BJ (cell line): ENCODE measurements at regions of chr9 and their contacts with region 1.

Region 1: GRCh38 chr9:95167998-95168397 is 149.5 kb downstream of the FANCC start:
- DNase-seq: peak; percentile 50
- H3K4me3 ChIP-seq: no peak overlapping the region
- H3K27me3 ChIP-seq: no peaks in the 10 kb centered on the region
- CTCF ChIP-seq: peak; percentile 91

Region 2: DNA sequence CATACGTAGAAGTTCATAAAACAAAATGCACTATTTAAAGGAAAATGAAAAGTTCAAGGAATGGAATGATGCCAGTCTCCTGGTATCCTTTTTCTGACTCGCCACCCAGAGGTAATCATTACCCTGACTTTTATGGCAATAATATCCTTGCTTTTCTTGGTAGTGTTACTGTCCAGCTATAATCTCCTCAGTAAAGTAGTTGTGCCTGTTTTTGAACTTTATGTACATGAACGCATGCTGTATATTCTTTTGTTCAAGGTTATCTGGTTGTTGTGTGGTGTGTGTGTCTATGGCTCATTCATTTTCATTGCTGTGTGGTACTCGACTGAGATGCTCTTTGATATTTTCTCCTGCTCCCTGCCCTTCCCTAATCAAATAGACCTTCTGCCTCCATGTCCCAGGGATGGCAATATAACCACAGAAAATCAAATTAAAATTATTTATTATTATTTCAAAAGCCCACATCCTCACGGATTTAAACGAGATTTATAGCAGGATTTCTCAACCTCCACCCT is 499.5 kb before region 1 on chr9:
- CTCF ChIA-PET with region 1: interaction called, 17 read pairs
- POLR2A ChIA-PET with region 1: no interaction called
- DNase-seq: no peak
- H3K4me3 ChIP-seq: no peak overlapping the region
- H3K27me3 ChIP-seq: no peaks in the 10 kb centered on the region
- CTCF ChIP-seq: no peak

Region 3: DNA sequence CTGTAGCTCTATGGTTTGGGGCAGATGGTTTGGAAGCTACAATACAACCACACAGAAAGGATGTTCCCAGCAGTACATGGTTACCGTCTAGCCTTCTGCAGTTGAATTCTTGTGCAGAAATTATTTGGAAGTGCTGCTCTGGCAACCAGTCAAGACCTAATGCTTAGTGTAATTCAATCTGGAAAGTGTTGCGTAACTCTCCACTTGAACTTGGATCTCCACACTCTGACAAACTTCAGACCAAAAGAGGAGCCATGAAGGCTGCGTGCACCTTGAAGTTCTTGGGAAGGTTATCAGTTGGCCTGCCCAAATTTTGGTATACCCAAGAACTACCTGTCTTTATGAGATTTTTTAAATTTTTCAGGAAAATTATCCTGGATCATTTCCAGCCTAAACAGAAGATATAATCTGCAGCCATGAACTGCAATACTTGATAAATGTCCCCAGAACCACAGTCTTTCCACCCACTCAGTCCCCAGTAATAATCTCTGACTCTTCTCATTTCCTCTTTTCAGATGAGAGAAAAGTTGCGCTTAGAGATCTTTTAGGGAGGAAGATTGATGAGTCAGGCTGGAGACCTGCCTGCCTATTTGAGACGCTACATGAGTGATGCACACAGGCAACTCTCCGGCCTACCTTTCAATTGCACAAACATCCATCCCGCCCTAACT is 10.4 kb before region 1 on chr9:
- CTCF ChIA-PET with region 1: interaction called, 14 read pairs
- POLR2A ChIA-PET with region 1: no interaction called
- DNase-seq: peak; percentile 67
- H3K4me3 ChIP-seq: no peak overlapping the region
- H3K27me3 ChIP-seq: no peaks in the 10 kb centered on the region
- CTCF ChIP-seq: no peak

Region 4: DNA sequence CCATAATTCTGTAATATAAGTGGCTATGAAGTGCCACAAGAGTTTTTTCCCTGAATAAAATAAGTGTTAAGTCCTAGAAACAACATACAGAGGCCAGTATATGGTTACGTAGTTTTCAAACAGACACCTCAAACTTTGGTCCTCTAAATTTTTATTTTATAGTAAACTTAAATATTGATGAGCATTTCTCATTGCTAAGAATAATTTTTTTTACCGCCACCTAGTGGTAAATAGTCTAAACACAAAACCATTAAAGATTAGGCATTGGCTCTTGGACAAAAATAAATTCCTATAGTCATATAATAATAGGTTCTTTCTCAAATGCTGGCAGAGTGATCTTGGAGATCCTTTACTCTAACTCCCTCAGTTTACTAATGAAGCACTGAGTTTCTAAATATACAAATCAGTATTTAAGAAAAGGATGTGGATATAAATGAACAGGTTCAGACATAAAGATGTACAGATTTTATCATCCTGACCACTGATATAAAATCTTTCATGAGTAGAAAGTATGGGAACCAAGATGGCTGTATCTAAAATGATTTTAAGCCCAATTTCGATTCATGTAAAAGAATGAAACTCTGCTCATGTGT is 13.3 kb after region 1 on chr9:
- CTCF ChIA-PET with region 1: interaction called, 22 read pairs
- POLR2A ChIA-PET with region 1: no interaction called
- DNase-seq: no peak
- H3K4me3 ChIP-seq: no peak overlapping the region
- H3K27me3 ChIP-seq: no peaks in the 10 kb centered on the region
- CTCF ChIP-seq: peak; percentile 41